ENCODE measurements at regions of chr17 and their contacts with region 1.

Region 1: GRCh38 chr17:22454070-22454999 is 762.0 kb downstream of the KCNJ18 start:
- DNase-seq: peak in 1 of 2 donors; percentile 49
- H3K4me3 ChIP-seq: no peak overlapping the region
- H3K27ac ChIP-seq: no peak overlapping the region
- H3K4me1 ChIP-seq: no peaks in the 10 kb centered on the region
- H3K27me3 ChIP-seq: no peaks in the 10 kb centered on the region
- CTCF ChIP-seq: no peak
- POLR2A ChIP-seq: no peak

Region 2: DNA sequence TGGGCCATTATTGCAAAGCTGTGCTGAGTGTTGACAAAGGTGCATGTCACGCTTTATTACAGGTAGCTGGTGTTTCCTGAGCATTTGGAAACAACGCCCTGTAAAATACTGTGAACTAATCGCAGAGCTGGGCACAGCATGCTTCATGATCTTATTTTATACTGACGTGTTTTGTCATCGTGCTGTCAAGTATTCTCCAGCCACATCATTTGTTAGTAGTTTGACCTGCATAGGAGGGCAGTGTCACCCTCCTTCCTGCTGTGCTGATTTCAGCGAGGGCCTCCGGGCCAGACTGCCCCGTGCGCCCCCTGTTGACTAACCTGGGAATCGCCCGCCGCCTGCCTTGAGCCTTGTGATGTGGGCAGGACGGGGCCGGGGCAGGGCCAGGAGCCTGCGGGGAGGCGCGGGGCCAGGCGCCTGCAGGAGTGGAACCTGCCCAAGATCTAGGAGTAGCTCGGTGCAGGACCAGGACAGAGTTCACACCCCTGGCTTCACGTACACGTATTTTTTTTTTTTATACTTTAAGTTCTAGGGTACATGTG is 58.7 kb after region 1 on chr17:
- intact Hi-C with region 1: loop called (anchors 10 kb)
- DNase-seq: peak in 1 of 2 donors; percentile 72
- H3K4me3 ChIP-seq: no peak overlapping the region
- H3K27ac ChIP-seq: no peak overlapping the region
- H3K4me1 ChIP-seq: no peaks in the 10 kb centered on the region
- H3K27me3 ChIP-seq: no peaks in the 10 kb centered on the region
- CTCF ChIP-seq: no peak
- POLR2A ChIP-seq: no peak